ENCODE measurements at regions of chr1 and their contacts with region 1.

Region 1: DNA sequence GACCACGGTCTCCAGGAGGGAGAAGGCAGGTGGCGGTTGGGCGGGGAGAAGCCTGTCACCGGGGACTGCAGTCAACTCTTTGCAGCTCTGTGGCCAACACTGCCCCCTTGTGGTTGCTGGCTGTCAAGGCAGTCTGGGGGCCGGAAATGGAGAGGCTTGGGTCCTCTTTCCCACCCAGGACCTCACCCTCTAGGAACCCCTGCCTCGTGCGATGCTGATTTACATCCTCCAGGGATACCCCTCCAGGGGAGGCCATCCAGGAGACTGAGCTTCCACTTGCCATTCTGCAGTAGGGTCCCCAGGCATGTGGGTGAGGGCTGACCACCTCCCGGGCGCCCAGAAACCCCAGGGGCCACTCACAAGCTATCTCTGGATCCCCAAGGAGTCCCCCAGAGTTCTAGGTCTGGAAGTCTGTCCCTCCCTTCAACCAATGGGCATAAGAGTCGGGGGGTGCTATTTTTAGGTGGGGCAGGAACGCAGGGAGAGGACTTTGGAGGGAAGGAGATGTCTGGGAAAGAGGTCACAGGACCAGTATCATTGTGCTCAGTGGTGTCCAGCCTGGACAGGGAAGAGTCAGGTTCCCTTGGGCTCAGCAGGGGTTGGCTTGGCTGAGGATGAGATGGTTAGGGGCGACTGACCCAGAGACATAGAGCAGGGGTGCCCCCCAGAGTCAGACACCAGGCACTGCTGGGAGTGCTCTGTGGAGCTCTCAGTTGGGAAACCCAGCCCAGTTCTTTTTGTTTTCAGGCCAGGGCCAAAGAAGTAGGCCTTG is 7.1 kb upstream of the GPR61 start:
- DNase-seq: peak; percentile 94
- ATAC-seq: peak; percentile 90
- H3K4me3 Mint-ChIP-seq: peak overlapping the region; percentile 48
- H3K27ac Mint-ChIP-seq: peak overlapping the region; percentile 91
- H3K4me1 Mint-ChIP-seq: peaks cover 23% of the 10 kb centered on the region
- H3K27me3 Mint-ChIP-seq: no peaks in the 10 kb centered on the region

Region 2: GRCh38 chr1:109263597-109264398 is 268.8 kb before region 1 on chr1:
- CTCF ChIA-PET with region 1: interaction called, 35 read pairs
- DNase-seq: peak; percentile 83
- ATAC-seq: peak; percentile 95
- H3K4me3 Mint-ChIP-seq: no peak overlapping the region
- H3K27ac Mint-ChIP-seq: no peak overlapping the region
- H3K4me1 Mint-ChIP-seq: peaks cover 2% of the 10 kb centered on the region
- H3K27me3 Mint-ChIP-seq: no peaks in the 10 kb centered on the region

Region 3: GRCh38 chr1:109397538-109398342 is 134.8 kb before region 1 on chr1 and contains the start of gene SORT1:
- CTCF ChIA-PET with region 1: interaction called, 77 read pairs
- DNase-seq: peak; percentile 76
- ATAC-seq: peak; percentile 98
- H3K4me3 Mint-ChIP-seq: peak within 1 kb of the TSS; percentile 68
- H3K27ac Mint-ChIP-seq: no peak within 1 kb of the TSS
- H3K4me1 Mint-ChIP-seq: peaks cover 16% of the 10 kb centered on the region
- H3K27me3 Mint-ChIP-seq: peaks cover 39% of the 10 kb centered on the region
- total RNA-seq, gene SORT1: 5.3 to 8.5 TPM

Region 4: DNA sequence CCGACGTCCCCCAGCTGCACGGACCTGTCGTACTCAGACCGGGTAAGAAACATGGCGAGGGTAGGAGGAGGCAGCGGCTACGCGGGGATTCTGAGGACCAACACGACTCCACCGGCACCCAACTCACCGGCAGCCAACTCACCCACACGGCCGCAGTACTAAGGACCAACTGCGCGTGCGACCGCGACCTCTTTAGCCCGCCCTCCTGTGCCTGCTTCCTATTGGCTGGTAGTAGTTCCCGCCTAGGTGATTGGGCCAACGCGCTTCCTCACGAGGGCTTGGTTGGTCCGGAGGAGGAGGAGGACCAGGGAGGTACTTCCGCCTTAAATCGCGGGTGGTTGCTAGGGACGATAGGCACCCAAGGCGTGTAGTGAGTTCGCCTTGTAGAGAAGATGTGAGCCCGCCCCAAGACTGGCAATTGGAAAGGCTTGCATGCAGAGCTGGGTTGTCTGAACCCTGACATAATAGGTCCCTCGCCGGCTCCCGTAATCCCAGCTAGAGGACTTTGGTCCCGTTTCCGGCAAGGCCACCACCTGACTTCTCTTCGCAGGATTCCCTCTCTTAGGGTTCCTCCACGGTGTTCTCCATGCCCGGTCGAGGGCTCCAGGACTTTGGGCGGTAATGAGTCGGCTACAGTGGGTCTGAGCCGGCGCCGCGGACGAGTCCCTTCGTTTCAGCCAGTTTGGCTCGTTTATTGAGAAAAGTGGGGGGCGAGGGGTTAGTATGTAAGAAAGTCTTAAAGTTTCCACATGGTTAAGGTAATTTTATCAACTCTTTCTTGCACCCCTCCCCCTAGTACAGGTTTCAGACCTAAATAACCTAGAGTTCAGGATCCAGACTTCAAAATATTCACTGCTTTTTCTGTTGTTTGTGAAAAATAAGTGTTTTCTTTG is 106.0 kb before region 1 on chr1 and contains the start of gene PSMA5:
- CTCF ChIA-PET with region 1: interaction called, 45 read pairs
- DNase-seq: peak; percentile 99
- ATAC-seq: peak; percentile 94
- H3K4me3 Mint-ChIP-seq: peak within 1 kb of the TSS; percentile 90
- H3K27ac Mint-ChIP-seq: peak within 1 kb of the TSS; percentile 99
- H3K4me1 Mint-ChIP-seq: peaks cover 37% of the 10 kb centered on the region
- H3K27me3 Mint-ChIP-seq: no peaks in the 10 kb centered on the region
- total RNA-seq, gene PSMA5: 178 to 211 TPM

Region 5: DNA sequence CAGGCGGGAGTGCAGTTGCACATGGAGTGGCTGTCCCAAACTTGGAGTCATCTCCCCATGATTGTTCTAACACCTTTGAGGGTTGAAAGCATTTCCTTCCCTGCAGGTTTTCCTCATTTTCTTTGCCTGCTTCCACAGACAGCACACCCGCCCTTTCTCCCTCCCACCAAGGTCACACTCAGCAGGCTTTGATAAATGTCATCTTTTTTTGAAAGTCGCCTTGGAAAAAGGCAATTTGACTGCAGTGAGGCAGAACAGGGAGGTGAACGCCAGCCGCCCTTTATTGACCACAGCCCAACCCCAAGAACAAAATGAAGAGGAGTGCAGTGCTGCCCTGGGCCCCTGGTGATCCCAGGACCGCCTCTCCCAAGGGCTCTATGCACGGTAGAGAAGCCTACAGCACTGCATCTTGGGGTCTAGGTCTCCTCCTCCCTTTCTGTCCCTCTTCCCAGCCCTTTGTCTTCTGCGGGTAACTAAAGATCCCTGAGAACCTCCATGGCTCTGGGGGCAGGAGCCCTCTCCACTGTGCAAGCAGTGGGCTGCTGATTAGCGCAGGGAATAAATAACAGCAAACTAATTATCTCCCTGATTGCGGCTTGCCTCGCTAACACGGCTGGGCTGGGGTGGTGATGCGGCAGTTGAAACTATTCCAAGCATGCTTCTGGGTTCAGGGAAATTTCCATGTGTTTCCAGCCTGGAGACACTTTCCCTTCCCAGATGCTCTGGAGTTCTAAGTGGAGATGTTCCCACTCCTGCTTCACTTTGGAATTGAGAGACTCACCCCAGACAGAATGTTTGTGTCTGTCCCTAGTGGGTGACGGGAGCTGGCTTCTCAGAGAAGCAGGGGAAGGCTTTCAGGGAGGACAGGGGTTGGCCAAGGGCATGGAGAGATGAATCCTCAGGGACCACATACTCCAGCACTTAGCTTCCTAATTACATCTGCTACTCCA is 11.3 kb before region 1 on chr1:
- CTCF ChIA-PET with region 1: interaction called, 1,550 read pairs
- DNase-seq: no peak
- ATAC-seq: no peak
- H3K4me3 Mint-ChIP-seq: no peak overlapping the region
- H3K27ac Mint-ChIP-seq: no peak overlapping the region
- H3K4me1 Mint-ChIP-seq: no peaks in the 10 kb centered on the region
- H3K27me3 Mint-ChIP-seq: peaks cover 13% of the 10 kb centered on the region

Region 6: DNA sequence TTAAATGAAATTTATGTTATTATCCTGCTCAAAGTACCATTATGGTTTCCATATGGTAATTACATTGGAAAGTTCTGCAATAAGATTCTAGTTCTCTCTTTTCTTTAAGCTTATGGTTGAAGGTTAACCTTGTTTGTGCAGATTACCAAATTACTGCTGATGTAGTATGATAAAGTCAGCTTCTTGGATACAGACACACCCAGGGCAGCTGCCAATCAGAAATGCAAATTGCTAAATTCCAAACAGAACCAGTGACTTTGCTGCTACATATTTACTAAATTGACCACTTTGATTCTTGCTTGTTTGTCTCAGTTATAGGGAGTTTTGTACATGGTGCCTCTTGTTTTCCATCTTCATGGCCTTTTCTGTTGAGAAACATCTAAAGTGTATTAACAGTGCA is 60.4 kb after region 1 on chr1:
- CTCF ChIA-PET with region 1: no interaction called
- DNase-seq: no peak
- ATAC-seq: no peak
- H3K4me3 Mint-ChIP-seq: no peak overlapping the region
- H3K27ac Mint-ChIP-seq: no peak overlapping the region
- H3K4me1 Mint-ChIP-seq: no peaks in the 10 kb centered on the region
- H3K27me3 Mint-ChIP-seq: no peaks in the 10 kb centered on the region

Region 7: GRCh38 chr1:109649491-109649914 is 117.0 kb after region 1 on chr1:
- CTCF ChIA-PET with region 1: interaction called, 11 read pairs
- DNase-seq: peak; percentile 21
- ATAC-seq: no peak
- H3K4me3 Mint-ChIP-seq: no peak overlapping the region
- H3K27ac Mint-ChIP-seq: no peak overlapping the region
- H3K4me1 Mint-ChIP-seq: peaks cover 7% of the 10 kb centered on the region
- H3K27me3 Mint-ChIP-seq: peaks cover 40% of the 10 kb centered on the region

Region 8: GRCh38 chr1:109895720-109896504 is 363.4 kb after region 1 on chr1:
- CTCF ChIA-PET with region 1: no interaction called
- DNase-seq: peak; percentile 63
- ATAC-seq: peak; percentile 78
- H3K4me3 Mint-ChIP-seq: no peak overlapping the region
- H3K27ac Mint-ChIP-seq: no peak overlapping the region
- H3K4me1 Mint-ChIP-seq: peaks cover 18% of the 10 kb centered on the region
- H3K27me3 Mint-ChIP-seq: no peaks in the 10 kb centered on the region

Measured in activated CD8-positive, alpha-beta memory T cell treated with anti-CD3 and anti-CD28 coated beads, Interleukin-2, amount 10 ng/mL, durations not matched to agents 7 days and 5 days (primary cell).